Right ventricle myocardium inferior (tissue), 1 donor: ENCODE measurements at regions of chr3 and their contacts with region 1.

Region 1: DNA sequence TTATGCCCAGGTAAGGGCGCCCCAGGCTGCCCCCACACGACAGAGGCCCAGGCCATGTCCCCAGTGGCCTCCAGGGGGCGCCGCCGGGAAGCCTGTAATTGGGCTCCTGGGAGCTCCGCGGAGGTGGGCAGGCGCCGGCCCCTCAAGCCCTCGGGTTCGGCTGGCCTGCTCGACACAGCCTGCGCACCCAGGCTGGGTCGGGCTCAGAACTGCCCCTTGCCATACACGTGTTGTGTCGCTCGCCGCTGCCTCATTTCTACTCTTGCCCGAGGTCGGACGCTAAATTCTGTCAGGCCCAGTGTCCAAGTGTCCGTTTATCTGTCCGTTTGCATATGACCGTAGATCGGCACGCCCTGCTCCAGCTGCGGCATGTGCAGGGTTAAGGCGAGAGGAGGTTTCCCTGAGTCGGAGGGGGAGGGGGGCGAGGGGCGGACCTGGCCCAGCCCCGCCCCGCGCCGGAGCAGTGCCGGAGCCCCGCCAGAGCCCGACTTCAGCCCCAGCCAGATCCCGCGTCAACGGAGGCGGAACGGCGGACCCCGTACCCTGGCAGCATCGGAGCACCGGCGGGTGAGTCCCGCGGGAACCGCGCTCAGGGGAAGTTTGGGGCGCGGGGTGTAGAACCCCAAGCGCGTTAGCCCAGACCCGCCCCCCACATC is at the start of gene KLHDC8B:
- DNase-seq: peak; percentile 92
- ATAC-seq: peak; percentile 91
- total RNA-seq, gene KLHDC8B: 128 TPM

Region 2: DNA sequence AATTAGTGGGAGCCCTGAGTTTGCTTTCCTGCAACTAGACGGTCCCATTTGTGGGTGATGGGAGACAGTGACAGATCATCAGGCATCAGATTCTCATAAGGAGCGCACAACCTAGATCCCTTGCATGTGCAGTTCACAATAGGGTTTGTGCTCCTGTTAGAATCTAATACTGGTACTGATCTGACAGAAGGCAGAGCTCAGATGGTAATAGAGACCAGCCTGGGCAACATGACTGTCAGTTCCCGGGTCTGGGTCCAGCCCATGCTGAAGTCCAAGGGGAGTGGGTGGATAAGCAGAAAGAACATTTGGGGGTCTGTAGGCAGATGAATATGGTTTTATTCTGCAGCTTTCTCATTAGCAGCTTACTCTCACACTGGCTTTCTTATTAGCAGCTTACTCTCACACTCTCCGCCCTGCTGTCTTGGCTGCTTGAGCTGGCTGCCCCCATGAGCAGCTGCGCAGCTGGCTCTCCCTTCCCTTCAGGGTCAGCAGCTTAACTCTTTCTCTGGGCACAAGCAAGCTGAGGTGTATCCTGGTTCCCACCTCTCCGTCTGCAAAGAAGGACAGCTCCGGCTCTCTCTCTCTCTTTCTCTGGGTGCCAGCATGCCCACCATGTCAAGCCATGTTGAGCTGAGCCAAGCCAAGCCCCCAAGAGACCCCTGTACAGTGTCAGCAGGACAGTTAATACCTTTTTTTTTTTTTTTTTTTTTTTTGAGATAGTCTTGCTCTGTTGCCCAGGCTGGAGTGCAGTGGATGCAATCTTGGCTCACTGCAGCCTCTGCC is 46.6 kb after region 1 on chr3:
- intact Hi-C with region 1: loop called (anchors 5 kb)
- DNase-seq: no peak
- ATAC-seq: peak; percentile 89

Region 3: DNA sequence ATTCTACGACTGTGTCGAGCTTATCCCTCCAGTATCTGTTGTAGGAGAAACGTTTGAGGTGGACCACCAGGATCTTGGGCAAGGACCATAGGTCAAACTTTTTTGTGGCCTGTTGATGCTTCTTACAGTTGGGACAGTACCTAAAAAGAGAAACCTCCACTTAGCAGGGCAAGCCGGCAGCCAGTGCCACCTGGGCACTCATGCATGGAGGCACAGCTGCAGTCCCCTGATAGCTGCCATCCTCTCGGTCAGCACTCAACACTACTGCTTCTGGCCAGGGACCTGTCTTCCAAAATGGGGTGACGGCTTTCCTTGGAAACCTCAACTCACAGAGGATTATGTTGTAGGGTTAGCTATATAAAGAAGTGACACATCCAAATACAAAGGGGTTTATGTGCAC is 112.8 kb after region 1 on chr3:
- intact Hi-C with region 1: no loop called
- DNase-seq: no peak
- ATAC-seq: no peak

Region 4: GRCh38 chr3:49295489-49296058 is 124.3 kb after region 1 on chr3:
- intact Hi-C with region 1: loop called (anchors 5 kb)
- DNase-seq: peak; percentile 73
- ATAC-seq: no peak

Region 5: DNA sequence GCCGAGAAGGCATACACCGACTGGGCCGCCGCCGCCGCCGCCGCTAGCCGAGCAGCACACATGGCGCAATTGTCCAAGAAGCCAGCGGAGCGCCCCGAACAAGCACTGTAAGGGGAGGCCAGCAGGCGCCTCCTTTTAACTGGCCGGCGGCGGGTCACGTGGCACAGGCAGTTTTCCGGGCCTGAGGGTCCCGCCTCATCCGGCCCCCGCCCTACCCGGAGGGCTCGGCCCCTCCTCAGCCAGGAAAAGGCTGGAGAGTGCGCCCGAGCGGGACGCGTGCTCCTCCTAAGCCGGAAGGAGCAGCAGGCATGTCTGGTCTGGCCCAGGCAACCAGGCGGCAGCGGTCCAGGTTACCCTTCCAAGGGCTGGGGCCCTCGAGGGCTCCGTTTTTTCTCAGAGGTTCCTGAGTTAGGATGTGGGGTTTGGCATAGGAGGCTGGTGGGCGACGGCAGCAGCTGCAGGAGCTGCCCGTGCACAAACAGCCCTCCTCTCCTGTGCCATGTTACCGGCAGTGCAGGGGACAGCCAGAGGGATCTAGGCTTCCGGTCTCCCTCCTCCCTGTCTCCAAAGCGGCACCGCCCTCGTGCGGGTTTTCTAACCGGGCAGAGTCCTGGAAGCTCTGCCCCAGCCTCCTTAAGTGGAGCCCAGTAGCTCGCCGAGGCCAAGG is 187.1 kb after region 1 on chr3 and contains the start of gene GPX1:
- intact Hi-C with region 1: loop called (anchors 5 kb)
- DNase-seq: peak; percentile 97
- ATAC-seq: peak; percentile 96
- total RNA-seq, gene GPX1: 136 TPM

Region 6: DNA sequence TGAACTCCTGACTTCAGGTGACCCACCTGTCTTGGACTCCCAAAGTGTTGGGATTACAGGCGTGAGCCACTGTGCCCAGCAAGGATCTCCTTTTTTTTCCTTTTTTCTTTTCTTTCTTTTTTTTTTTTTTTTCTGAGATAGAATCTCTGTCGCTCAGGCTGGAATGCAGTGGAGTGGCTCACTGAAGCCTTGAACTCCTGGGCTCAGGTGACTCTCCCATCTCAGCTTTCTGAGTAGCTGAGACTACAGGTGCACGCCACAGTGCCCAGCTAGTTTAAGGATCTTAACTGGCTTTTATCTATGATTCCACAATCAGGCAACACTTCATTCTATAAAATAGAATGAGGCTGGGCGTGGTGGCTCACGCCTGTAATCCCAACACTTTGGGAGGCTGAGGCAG is 274.1 kb after region 1 on chr3:
- intact Hi-C with region 1: loop called (anchors 5 kb)
- DNase-seq: no peak
- ATAC-seq: no peak